ENCODE measurements at regions of chr11 and their contacts with region 1.

Region 1: GRCh38 chr11:2151500-2152257 is 9.3 kb downstream of the INS start:
- DNase-seq: peak; percentile 76
- H3K4me3 ChIP-seq: no peak overlapping the region
- H3K27ac ChIP-seq: no peak overlapping the region
- H3K4me1 ChIP-seq: no peaks in the 10 kb centered on the region
- H3K27me3 ChIP-seq: peaks cover 15% of the 10 kb centered on the region
- CTCF ChIP-seq: peak; percentile 67

Region 2: DNA sequence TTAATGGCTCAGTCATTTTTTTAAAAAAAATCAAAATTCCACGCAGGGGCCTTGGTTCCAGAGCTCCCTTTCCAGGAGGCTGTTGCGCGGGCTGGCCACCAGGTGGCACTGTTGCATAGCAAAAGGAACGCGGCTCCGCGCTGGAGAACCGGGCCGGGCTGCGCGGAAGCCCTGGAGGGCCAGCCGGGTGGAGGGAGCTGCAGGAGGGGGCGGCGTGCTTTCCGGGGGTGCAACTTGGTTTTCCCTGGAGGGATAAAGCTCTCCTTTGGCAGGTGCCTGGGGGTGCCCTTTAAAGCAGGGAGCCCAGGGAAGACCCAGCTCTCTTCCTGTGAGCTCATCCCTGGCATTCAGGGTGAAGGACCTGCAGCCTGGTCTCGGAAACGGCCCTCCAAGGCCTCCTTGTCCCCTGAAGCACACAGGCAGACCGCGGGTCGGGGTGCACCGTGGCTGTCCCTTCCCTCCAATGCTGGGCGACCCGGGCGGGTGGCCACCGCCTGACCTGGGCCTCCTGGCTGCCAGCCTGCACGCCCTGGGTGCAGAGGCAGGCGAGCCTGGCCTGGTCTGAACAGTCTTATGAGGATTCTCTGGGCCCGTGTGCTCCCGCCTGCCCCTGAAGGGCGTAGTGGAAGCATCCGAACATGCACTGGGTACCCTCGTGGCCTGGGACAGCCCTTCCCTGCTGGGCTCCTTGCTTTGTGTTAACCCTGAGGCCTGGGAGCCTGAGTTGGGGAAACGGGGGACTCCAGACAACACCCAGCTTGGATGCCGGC is 498.7 kb before region 1 on chr11:
- CTCF ChIA-PET with region 1: interaction called, 29 read pairs
- POLR2A ChIA-PET with region 1: no interaction called
- intact Hi-C with region 1: loop called (anchors 1 kb)
- DNase-seq: peak; percentile 61
- H3K4me3 ChIP-seq: no peak overlapping the region
- H3K27ac ChIP-seq: no peak overlapping the region
- H3K4me1 ChIP-seq: no peaks in the 10 kb centered on the region
- H3K27me3 ChIP-seq: no peaks in the 10 kb centered on the region
- CTCF ChIP-seq: peak; percentile 87

Region 3: GRCh38 chr11:1694064-1694845 is 457.4 kb before region 1 on chr11:
- CTCF ChIA-PET with region 1: interaction called, 44 read pairs
- POLR2A ChIA-PET with region 1: no interaction called
- intact Hi-C with region 1: loop called (anchors 2 kb)
- DNase-seq: peak; percentile 70
- H3K4me3 ChIP-seq: peak overlapping the region; percentile 50
- H3K27ac ChIP-seq: peak overlapping the region; percentile 42
- H3K4me1 ChIP-seq: no peaks in the 10 kb centered on the region
- H3K27me3 ChIP-seq: no peaks in the 10 kb centered on the region
- CTCF ChIP-seq: peak; percentile 89

Region 4: GRCh38 chr11:1837171-1838076 is 314.3 kb before region 1 on chr11:
- CTCF ChIA-PET with region 1: interaction called, 16 read pairs
- POLR2A ChIA-PET with region 1: no interaction called
- intact Hi-C with region 1: loop called (anchors 2 kb)
- DNase-seq: peak; percentile 50
- H3K4me3 ChIP-seq: no peak overlapping the region
- H3K27ac ChIP-seq: no peak overlapping the region
- H3K4me1 ChIP-seq: no peaks in the 10 kb centered on the region
- H3K27me3 ChIP-seq: no peaks in the 10 kb centered on the region
- CTCF ChIP-seq: peak; percentile 67

Region 5: GRCh38 chr11:1882519-1883238 is 269.0 kb before region 1 on chr11:
- CTCF ChIA-PET with region 1: interaction called, 74 read pairs
- POLR2A ChIA-PET with region 1: no interaction called
- intact Hi-C with region 1: loop called (anchors 2 kb)
- DNase-seq: peak; percentile 68
- H3K4me3 ChIP-seq: no peak overlapping the region
- H3K27ac ChIP-seq: no peak overlapping the region
- H3K4me1 ChIP-seq: no peaks in the 10 kb centered on the region
- H3K27me3 ChIP-seq: no peaks in the 10 kb centered on the region
- CTCF ChIP-seq: peak; percentile 86

Region 6: DNA sequence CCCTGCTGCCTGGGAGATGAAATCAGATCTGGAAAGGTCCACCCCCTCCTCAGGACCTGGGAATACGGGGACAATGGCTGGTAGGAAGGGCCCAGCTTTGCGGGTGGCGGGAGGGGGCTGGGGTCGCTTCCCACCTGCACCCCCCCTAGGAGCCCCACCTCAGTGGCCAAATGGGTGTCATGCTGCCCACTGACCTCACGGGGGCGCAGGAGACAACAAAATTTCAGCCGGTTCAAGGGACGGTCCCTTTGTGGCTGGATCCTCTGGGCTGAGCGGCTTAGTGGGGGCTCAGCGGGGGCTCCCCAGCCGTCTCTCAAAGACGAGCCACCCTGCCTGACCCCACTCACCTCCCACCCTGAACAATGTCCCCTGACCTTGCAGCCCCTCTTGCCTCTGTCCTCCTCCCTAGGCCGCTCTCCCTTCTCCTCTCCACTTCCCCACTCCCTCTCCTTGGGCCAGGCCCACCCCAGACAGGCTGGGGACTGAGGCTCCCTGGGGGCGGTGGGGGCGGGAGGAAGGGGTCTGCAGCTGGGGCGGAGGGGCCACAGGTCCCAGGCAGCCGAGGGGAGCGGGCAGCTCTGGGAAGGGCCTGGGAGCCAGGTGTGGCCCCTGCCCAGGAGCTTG is 114.7 kb before region 1 on chr11:
- CTCF ChIA-PET with region 1: interaction called, 36 read pairs
- POLR2A ChIA-PET with region 1: no interaction called
- intact Hi-C with region 1: no loop called
- DNase-seq: no peak
- H3K4me3 ChIP-seq: no peak overlapping the region
- H3K27ac ChIP-seq: no peak overlapping the region
- H3K4me1 ChIP-seq: no peaks in the 10 kb centered on the region
- H3K27me3 ChIP-seq: no peaks in the 10 kb centered on the region
- CTCF ChIP-seq: no peak

Region 7: DNA sequence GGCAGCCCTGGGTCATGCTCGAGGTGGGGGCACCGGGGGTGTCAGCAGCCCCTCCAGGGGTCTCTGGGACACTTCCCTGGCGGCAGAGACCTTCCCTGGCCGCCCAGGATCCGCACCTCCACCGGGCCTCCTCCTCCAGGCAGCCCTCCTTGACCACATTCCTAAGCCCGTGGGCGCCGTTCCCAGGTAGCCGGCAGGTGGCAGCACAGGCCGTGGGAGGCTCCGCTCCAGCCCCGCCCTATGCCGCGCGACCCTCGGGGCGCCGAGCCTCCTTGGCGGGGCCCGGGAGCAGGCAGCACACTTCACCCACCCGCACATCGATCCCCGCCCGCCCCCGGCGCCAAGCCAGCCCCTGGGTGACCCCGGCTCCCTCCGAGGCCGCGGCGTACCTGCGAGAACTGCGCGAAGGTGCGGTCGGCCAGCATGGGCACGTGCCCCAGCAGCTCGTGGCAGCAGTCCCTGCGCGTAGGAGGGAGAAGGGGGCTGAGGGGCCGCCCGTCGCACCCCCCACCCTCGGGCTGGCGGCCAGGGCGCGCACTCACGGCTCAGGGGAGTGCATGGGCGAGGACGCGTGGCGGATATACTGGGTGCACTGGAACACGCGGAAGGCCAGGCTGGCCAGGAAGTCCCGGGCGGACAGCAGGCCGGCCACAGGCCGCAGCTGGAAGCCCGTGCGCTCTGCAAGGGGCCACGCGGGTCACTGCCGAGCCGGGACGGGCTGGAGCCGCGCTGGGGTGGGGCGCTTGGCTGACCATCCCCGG is 14.6 kb after region 1 on chr11:
- CTCF ChIA-PET with region 1: no interaction called
- POLR2A ChIA-PET with region 1: no interaction called
- intact Hi-C with region 1: no loop called
- DNase-seq: peak; percentile 35
- H3K4me3 ChIP-seq: no peak overlapping the region
- H3K27ac ChIP-seq: no peak overlapping the region
- H3K4me1 ChIP-seq: no peaks in the 10 kb centered on the region
- H3K27me3 ChIP-seq: no peaks in the 10 kb centered on the region
- CTCF ChIP-seq: peak; percentile 61

Measured in A673 (cell line).